IMR-90 (cell line): ENCODE measurements at regions of chr5 and their contacts with region 1.

Region 1: DNA sequence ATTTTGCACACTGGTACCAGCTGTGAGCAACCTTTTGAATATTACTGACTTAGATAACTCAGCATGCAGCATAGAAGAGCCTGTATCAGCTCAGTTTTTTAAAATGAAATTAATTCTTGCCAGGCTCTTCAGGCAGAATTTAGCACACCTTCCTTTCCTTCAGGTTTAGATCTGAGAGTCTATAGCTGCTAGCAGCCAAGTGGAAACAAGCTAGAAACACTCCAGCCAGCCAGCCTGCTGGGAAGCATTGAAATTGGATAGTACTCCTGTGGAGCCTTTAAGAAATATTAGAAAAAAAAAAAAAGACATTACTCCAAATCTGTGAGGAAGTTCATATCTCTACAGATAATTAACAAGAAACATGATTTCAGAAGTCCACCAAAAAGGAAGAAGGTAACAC is 812.2 kb downstream of the DTWD2 start:
- DNase-seq: no peak
- ATAC-seq: no peak
- H3K4me3 ChIP-seq: no peak overlapping the region
- H3K27ac ChIP-seq: no peak overlapping the region
- H3K4me1 ChIP-seq: no peaks in the 10 kb centered on the region
- H3K27me3 ChIP-seq: no peaks in the 10 kb centered on the region
- CTCF ChIP-seq: no peak
- POLR2A ChIP-seq: no peak
- RAD21 ChIP-seq: no peak

Region 2: GRCh38 chr5:118165619-118166018 is 10.5 kb before region 1 on chr5:
- CTCF ChIA-PET with region 1: interaction called, 3 read pairs
- POLR2A ChIA-PET with region 1: interaction called, 13 read pairs
- dilution Hi-C with region 1: no loop called
- in situ Hi-C with region 1: no loop called
- intact Hi-C with region 1: no loop called
- DNase-seq: no peak
- ATAC-seq: no peak
- H3K4me3 ChIP-seq: no peak overlapping the region
- H3K27ac ChIP-seq: no peak overlapping the region
- H3K4me1 ChIP-seq: no peaks in the 10 kb centered on the region
- H3K27me3 ChIP-seq: no peaks in the 10 kb centered on the region
- CTCF ChIP-seq: no peak
- POLR2A ChIP-seq: no peak
- RAD21 ChIP-seq: no peak